ENCODE measurements at regions of chr12 and their contacts with region 1.

Region 1: GRCh38 chr12:57182921-57183790 is 33.4 kb upstream of the NXPH4 start:
- DNase-seq: peak; percentile 18
- H3K4me3 ChIP-seq: no peak overlapping the region
- CTCF ChIP-seq: peak; percentile 90

Region 2: GRCh38 chr12:57238854-57239554 is 55.8 kb after region 1 on chr12:
- in situ Hi-C with region 1: loop called (anchors 10 kb)
- DNase-seq: peak; percentile 47
- H3K4me3 ChIP-seq: peak overlapping the region; percentile 49
- CTCF ChIP-seq: peak; percentile 100

Measured in astrocyte of the cerebellum (primary cell).